Naive thymus-derived CD4-positive, alpha-beta T cell (primary cell): ENCODE measurements at regions of chr12 and their contacts with region 1.

Region 1: GRCh38 chr12:50174971-50175715 is 8.0 kb upstream of the CERS5 start:
- DNase-seq: peak in 7 of 9 donors; percentile 25 to 67 (median 56)
- ATAC-seq: peak; percentile 63
- H3K4me3 ChIP-seq: no peak overlapping the region
- H3K4me3 Mint-ChIP-seq: no peak overlapping the region
- H3K27ac ChIP-seq: no peak overlapping the region
- H3K27ac Mint-ChIP-seq: peak overlapping the region in 5 of 9 donors; percentile 3 to 71 (median 32)
- H3K4me1 ChIP-seq: no peaks in the 10 kb centered on the region
- H3K4me1 Mint-ChIP-seq: peaks cover 0 to 5% (median 0%) of the 10 kb centered on the region in 7 donors
- H3K27me3 ChIP-seq: no peaks in the 10 kb centered on the region
- H3K27me3 Mint-ChIP-seq: no peaks in the 10 kb centered on the region

Region 2: DNA sequence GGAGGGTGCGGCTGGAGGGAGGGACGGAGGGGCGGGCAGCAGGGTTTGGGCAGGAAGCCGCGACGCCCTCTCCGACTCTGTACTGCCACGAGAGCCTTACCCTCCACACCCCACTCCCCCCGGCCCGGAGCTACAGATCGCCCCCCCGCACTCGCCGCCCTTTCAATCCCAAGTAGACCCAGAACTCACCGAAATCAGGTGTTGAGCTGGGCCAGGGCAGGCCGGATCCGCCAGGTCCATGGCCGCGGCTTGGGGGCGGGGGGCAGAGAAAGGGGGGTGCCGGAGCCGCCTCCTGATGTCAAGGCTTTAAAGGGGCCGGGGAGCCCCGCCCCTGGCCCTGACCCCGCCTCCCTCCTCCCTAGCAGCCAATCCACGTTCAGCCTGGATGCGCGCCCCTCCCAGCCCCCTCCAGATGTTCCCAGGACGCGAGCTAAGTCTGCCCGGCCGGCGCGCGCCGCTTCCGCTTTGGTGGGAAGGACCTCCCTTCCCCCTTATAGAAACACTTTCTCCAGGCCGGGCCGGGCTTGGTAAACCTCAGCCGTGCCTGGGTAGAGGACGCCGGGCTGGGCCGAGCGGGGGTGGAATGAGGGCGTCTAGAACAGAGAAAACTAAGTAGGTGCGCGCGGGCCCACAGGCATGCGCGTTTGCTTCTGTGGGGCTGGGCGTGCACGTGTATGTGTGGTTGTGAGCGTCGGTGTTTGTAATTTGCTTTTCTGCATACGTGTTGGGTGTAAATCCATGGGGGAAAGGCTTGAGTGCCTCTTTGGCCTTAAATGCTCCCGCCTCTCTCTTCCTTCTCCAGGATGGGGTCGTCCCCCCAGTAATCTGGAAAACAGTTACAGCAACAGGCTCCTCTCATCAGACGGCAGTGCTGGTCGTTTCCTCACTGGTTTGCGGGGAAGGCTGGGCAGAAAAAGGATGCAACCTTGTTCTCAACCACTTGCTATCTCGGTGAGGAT is 346.7 kb before region 1 on chr12 and contains the start of gene NCKAP5L:
- CTCF ChIA-PET with region 1: no interaction called
- POLR2A ChIA-PET with region 1: no interaction called
- intact Hi-C with region 1: no loop called
- DNase-seq: peak; percentile 86 to 94 (median 93)
- ATAC-seq: peak; percentile 96
- H3K4me3 ChIP-seq: peak within 1 kb of the TSS; percentile 82
- H3K4me3 Mint-ChIP-seq: peak within 1 kb of the TSS; percentile 88 to 99 (median 96)
- H3K27ac ChIP-seq: peak within 1 kb of the TSS; percentile 79
- H3K27ac Mint-ChIP-seq: peak within 1 kb of the TSS; percentile 89 to 99 (median 95)
- H3K4me1 ChIP-seq: peaks cover 8 to 16% of the 10 kb centered on the region in 2 donors
- H3K4me1 Mint-ChIP-seq: peaks cover 7 to 42% (median 30%) of the 10 kb centered on the region in 7 donors
- H3K27me3 ChIP-seq: no peaks in the 10 kb centered on the region
- H3K27me3 Mint-ChIP-seq: peaks cover 0 to 13% (median 0%) of the 10 kb centered on the region in 5 donors
- total RNA-seq, gene NCKAP5L: 4.3 to 27.5 (median 12.0) TPM

Region 3: DNA sequence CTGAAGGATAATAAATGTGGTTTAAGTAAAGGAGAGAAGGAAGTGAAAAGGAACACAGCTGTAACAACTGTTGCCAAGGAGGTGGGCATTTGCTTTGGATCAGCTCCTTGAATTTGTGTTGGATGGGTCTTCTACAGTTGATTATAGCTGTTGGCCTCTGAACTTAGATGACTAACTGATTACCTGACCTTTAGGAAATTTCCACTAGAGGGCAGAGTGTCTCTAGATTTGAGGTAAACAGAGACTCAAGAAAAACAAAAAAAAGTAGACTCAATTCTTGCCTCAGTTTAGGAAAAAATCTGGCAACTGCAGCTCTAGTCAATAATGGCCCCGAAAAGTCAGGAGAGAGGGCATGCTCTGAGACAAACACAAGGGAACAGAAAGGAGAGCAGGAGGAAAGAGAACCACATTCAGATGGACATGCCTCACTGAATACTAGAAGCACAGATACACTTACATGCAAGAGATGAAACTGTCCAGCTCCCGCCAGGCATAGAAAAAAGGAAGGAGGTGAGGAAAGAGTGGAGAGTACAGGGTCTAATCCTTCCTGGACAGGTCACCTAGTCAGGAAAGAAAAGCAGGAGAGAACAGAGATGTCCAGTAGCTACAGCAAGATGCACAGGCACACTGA is 42.5 kb before region 1 on chr12:
- CTCF ChIA-PET with region 1: interaction called, 32 read pairs
- POLR2A ChIA-PET with region 1: no interaction called
- intact Hi-C with region 1: loop called (anchors 1 kb)
- DNase-seq: peak in 7 of 9 donors; percentile 29 to 62 (median 49)
- ATAC-seq: peak; percentile 61
- H3K4me3 ChIP-seq: no peak overlapping the region
- H3K4me3 Mint-ChIP-seq: no peak overlapping the region
- H3K27ac ChIP-seq: no peak overlapping the region
- H3K27ac Mint-ChIP-seq: peak overlapping the region in 8 of 9 donors; percentile 2 to 79 (median 36)
- H3K4me1 ChIP-seq: no peaks in the 10 kb centered on the region
- H3K4me1 Mint-ChIP-seq: peaks cover 9 to 19% (median 14%) of the 10 kb centered on the region in 7 donors
- H3K27me3 ChIP-seq: no peaks in the 10 kb centered on the region
- H3K27me3 Mint-ChIP-seq: no peaks in the 10 kb centered on the region